ENCODE measurements at regions of chr14 and their contacts with region 1.

Region 1: GRCh38 chr14:35810963-35811362 is 1.9 kb upstream of the RALGAPA1 start:
- DNase-seq: no peak
- H3K4me3 ChIP-seq: no peak overlapping the region
- H3K27ac ChIP-seq: no peak overlapping the region
- H3K4me1 ChIP-seq: peaks cover 0 to 24% (median 21%) of the 10 kb centered on the region in 4 donors
- H3K27me3 ChIP-seq: no peaks in the 10 kb centered on the region
- CTCF ChIP-seq: no peak
- EP300 ChIP-seq: no peak
- POLR2A ChIP-seq: no peak

Region 2: GRCh38 chr14:35826218-35826951 is 15.4 kb after region 1 on chr14 and contains the start of gene BRMS1L:
- intact Hi-C with region 1: loop called (anchors 2 kb)
- DNase-seq: peak; percentile 99
- H3K4me3 ChIP-seq: peak within 1 kb of the TSS; percentile 65 to 94 (median 88)
- H3K27ac ChIP-seq: peak within 1 kb of the TSS; percentile 95 to 99 (median 98)
- H3K4me1 ChIP-seq: peaks cover 0 to 13% (median 8%) of the 10 kb centered on the region in 4 donors
- H3K27me3 ChIP-seq: no peaks in the 10 kb centered on the region
- CTCF ChIP-seq: no peak
- EP300 ChIP-seq: no peak
- POLR2A ChIP-seq: peak; percentile 80 to 85
- total RNA-seq, gene BRMS1L: 5.8 to 10.5 (median 9.7) TPM

Region 3: DNA sequence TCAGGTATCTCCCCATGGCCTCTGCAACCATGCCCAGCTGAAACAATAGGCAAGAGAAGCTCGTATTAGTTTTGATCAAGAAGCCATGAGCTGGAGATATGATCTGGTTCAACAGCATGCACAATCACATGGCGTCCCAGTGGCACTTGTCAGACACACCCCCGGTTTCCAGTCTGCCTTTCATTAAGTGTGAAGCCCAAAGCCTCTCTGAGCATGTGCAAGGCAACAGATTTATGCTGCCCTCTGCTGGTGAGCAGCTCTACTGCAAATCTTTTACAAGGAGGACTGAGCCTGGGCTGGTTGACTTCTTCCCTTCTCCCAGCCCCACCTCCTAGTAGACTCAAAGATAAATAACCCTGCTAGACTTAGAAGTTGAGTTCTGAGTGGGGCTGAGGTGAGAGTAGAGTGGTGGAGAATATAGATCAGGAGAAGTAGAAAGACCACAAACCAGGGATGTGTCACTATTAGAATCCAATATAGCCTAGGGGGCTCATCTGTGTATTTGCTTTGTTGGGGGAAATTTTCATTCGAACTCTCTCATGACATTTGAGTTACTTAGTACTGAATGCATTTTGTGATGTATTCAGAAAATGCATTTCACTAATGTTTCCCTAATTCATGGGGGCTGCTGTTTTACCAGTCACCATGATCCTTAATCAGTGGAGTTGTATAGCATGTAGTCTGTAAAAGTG is 563.2 kb after region 1 on chr14:
- intact Hi-C with region 1: no loop called
- DNase-seq: peak; percentile 69
- H3K4me3 ChIP-seq: no peak overlapping the region
- H3K27ac ChIP-seq: no peak overlapping the region
- H3K4me1 ChIP-seq: no peaks in the 10 kb centered on the region
- H3K27me3 ChIP-seq: no peaks in the 10 kb centered on the region
- CTCF ChIP-seq: peak in 3 of 4 experiments; percentile 53 to 69 (median 58)
- EP300 ChIP-seq: no peak
- POLR2A ChIP-seq: no peak

Measured in sigmoid colon (tissue), 7 donors.